ENCODE measurements at regions of chr1 and their contacts with region 1.

Region 1: DNA sequence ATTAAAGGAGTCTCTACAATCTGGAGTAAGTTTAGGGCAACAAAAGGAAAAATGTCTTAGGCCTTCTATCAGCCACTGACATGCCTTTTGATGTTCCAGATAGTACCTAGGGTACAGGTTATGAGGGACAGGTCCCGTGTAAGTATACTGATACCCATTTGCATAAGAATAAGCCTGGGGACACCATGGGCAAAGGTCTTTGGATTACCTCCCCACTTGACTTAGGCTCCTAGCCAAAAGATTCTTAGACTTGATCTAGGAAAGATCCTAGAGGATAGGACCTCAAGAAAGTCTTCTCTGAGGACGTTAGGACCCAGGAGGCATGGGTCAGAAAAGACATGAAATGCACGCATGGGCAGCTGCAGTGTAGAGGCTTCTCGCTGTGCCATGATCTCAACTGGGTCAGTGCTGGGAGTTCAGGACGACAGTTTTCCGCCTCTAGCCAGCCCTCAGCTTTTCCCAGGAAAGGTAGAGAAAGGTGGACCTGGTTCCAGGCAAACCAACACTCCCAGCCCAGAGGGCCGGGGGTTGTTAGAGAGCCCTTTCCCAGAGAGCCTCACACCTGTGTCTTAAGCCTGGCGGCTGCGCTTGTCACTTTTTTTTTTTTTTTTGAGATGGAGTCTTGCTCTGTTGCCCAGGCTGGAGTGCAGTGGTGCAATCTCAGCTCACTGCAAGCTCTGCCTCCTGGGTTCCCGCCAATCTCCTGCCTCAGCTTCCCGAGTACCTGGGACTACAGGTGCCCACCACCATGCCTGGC is 26.6 kb downstream of the MSTO1 start:
- DNase-seq: no peak
- H3K4me3 ChIP-seq: no peak overlapping the region
- H3K27ac ChIP-seq: no peak overlapping the region
- H3K4me1 ChIP-seq: no peaks in the 10 kb centered on the region
- H3K27me3 ChIP-seq: no peaks in the 10 kb centered on the region
- CTCF ChIP-seq: no peak

Region 2: DNA sequence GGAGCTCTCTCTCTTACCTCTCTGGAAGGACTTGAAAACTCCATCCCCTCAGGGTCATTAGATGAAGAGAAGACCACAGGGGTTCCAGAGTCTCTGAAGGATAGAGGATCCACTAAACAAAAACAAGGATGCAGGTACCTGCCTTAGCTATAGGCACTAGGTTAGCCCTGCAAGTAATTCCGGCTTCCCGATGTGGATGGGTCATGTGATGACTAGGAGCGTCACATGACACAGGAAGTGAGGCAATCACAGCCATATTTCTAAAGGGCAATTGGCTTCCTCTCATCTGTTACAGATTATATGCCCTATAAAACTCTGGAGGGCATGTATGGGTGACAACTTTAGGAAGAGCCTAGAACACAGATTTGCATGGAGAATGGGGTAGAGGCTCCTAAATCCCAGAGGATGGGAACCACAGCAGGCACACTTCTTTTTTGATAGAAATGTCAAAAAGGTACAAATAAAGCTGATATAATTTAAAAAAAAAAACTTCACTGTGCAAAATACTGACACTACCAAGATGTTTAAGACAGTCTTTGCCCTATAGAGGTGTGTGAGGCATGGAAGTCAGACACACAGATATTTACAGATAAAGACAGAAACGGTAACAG is 395.4 kb before region 1 on chr1:
- CTCF ChIA-PET with region 1: no interaction called
- POLR2A ChIA-PET with region 1: no interaction called
- intact Hi-C with region 1: no loop called
- DNase-seq: peak; percentile 51 to 76
- H3K4me3 ChIP-seq: peak overlapping the region; percentile 61; the same call in 1 of the 2 replicates
- H3K27ac ChIP-seq: peak overlapping the region; percentile 29; the same call in 1 of the 2 replicates
- H3K4me1 ChIP-seq: peaks cover 26% of the 10 kb centered on the region
- H3K27me3 ChIP-seq: no peaks in the 10 kb centered on the region
- CTCF ChIP-seq: no peak

Region 3: DNA sequence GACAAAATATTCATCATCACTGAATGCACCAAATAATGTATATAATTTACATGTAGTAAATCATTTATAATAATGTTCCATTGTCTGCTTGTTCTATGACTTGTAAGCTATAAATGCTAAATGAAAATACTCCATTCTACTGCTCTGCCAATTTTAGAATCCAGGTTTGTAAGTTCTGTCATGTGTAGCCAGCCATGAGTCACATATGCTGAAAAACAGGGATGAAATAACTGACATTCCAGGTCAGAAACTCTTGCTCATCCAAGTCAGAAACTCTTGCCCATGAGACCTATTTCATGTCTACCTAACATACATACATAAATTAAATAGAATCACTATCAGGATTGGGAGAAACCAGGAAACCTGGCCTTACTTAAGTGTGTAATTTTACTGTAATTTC is 169.6 kb before region 1 on chr1:
- CTCF ChIA-PET with region 1: no interaction called
- POLR2A ChIA-PET with region 1: no interaction called
- intact Hi-C with region 1: no loop called
- DNase-seq: no peak
- H3K4me3 ChIP-seq: no peak overlapping the region
- H3K27ac ChIP-seq: no peak overlapping the region
- H3K4me1 ChIP-seq: no peaks in the 10 kb centered on the region
- H3K27me3 ChIP-seq: no peaks in the 10 kb centered on the region
- CTCF ChIP-seq: no peak

Region 4: DNA sequence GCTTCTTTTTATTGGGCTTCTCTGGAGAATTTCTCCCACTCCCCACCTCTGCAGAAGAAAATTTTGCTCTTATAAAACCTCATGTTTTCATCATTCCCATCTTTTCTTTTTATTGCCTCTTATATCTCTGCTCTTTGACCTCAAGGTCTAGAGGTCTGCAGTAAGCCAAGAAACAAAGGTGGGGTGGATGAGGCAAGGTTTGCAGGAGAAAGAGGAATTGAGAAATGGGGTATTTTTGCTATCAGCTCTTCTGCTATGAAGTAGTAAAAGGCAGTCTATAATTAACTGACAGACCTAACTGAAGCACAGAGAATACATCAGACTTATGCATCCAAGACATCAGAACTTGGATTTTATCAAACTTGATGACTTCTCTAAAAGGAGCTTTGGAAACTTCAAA is 245.7 kb after region 1 on chr1:
- CTCF ChIA-PET with region 1: interaction called, 14 read pairs
- POLR2A ChIA-PET with region 1: no interaction called
- intact Hi-C with region 1: no loop called
- DNase-seq: no peak
- H3K4me3 ChIP-seq: no peak overlapping the region
- H3K27ac ChIP-seq: no peak overlapping the region
- H3K4me1 ChIP-seq: no peaks in the 10 kb centered on the region
- H3K27me3 ChIP-seq: no peaks in the 10 kb centered on the region
- CTCF ChIP-seq: no peak